ENCODE measurements at regions of chr12 and their contacts with region 1.

Region 1: GRCh38 chr12:4857472-4858291 is 52.0 kb upstream of the KCNA1 start:
- DNase-seq: peak; percentile 78
- ATAC-seq: peak; percentile 25
- H3K4me3 Mint-ChIP-seq: peak overlapping the region; percentile 28
- H3K27ac Mint-ChIP-seq: no peak overlapping the region
- H3K4me1 Mint-ChIP-seq: peaks cover 16% of the 10 kb centered on the region
- H3K27me3 Mint-ChIP-seq: peaks cover 34% of the 10 kb centered on the region
- CTCF ChIP-seq: peak; percentile 60

Region 2: DNA sequence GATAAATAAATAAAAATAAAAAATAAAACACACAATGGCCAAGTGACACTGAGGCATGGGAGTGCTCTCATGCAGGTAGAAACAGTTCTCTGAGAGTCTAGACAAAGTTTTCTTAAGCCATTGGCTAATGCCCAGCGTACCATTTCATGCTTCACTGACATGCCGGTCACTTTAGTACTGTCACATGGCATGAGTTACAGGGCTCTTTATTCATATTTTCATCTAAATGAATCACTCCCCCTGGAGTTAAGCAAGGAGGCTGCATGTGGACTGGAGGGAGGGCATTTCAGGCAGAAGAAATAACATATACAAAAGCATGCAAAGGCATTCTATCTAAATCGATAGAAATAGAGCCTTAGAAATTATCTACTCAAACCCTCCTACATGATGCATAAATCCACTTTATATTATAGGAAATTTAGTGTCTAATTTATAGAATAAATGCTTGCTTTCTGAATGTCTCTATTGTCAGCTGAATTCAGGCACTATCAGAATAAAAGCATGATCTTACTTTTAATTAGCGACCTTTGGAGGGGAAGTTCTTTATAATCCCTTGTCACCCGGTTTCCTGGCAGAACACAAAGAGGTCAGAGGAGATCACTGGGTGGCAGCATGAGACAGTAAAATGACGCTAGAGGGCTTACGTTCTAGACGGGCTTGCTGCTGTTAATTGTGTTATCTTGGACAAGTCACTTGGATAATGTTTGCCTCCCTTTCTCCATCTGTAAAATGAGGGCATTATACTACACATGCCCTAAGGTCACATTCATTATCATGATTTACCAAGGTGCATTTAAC is 278.2 kb before region 1 on chr12:
- CTCF ChIA-PET with region 1: interaction called, 10 read pairs
- POLR2A ChIA-PET with region 1: no interaction called
- DNase-seq: no peak
- ATAC-seq: peak; percentile 80
- H3K4me3 Mint-ChIP-seq: no peak overlapping the region
- H3K27ac Mint-ChIP-seq: no peak overlapping the region
- H3K4me1 Mint-ChIP-seq: peaks cover 20% of the 10 kb centered on the region
- H3K27me3 Mint-ChIP-seq: peaks cover 5% of the 10 kb centered on the region
- CTCF ChIP-seq: no peak

Region 3: GRCh38 chr12:4717806-4718205 is 139.9 kb before region 1 on chr12:
- CTCF ChIA-PET with region 1: no interaction called
- POLR2A ChIA-PET with region 1: no interaction called
- DNase-seq: no peak
- ATAC-seq: peak; percentile 18
- H3K4me3 Mint-ChIP-seq: no peak overlapping the region
- H3K27ac Mint-ChIP-seq: peak overlapping the region; percentile 24
- H3K4me1 Mint-ChIP-seq: peaks cover 58% of the 10 kb centered on the region
- H3K27me3 Mint-ChIP-seq: no peaks in the 10 kb centered on the region
- CTCF ChIP-seq: no peak

Region 4: DNA sequence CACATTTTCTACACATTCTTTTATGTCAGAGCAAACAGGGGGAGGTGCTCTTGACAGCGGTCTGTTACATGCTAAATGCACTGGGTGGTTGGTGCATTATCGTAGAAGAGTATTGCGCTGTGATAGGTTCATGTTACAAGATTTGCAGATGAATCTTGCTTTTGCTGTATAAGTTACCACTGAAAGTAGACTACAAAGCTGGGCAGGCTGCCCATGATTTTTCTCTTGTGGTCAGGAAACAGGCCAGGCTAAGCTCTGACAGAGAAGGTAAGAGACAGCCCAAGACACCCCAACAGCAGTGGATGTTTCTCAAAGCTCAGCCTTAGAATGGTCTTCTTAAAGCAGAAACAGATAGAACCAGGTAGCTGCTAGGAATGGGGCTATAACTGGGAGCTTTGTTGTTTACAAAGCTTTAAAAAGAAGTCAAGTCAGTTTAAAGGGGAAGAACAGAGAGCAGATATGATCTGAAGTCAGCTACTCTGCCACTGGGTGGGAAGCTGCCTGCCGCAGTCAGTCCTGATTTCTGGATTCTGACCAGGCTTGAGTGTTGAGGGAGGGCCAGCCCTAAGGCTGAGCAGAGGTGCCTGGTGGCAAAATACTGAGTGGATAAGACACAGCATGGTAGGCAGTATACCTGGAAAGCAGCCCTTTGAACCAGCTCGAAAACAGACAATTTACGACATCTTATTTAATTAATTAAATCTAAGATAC is 61.4 kb after region 1 on chr12:
- CTCF ChIA-PET with region 1: interaction called, 10 read pairs
- POLR2A ChIA-PET with region 1: no interaction called
- DNase-seq: no peak
- ATAC-seq: no peak
- H3K4me3 Mint-ChIP-seq: no peak overlapping the region
- H3K27ac Mint-ChIP-seq: no peak overlapping the region
- H3K4me1 Mint-ChIP-seq: no peaks in the 10 kb centered on the region
- H3K27me3 Mint-ChIP-seq: peaks cover 39% of the 10 kb centered on the region
- CTCF ChIP-seq: no peak

Region 5: DNA sequence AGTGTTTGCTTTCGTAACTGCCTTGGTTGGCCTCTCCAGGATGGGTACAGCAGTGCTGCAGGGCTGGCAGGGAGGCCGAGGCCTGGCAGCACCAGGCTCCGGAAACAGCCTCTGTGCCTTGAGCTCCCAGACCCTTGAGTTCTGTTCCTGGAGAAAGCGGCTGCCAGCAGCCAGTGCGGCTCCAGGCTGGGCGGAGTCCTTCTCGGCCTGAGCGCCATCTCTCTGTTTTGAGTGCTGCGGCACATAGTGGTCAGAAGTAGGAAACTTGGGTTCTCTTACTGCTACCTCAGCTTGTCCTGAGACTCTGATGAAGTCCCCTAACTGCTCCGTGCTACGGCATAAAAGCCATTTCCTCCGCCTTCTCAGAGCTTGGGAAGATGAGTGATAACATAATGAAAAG is 117.9 kb after region 1 on chr12:
- CTCF ChIA-PET with region 1: interaction called, 31 read pairs
- POLR2A ChIA-PET with region 1: no interaction called
- DNase-seq: peak; percentile 42
- ATAC-seq: peak; percentile 87
- H3K4me3 Mint-ChIP-seq: no peak overlapping the region
- H3K27ac Mint-ChIP-seq: no peak overlapping the region
- H3K4me1 Mint-ChIP-seq: peaks cover 11% of the 10 kb centered on the region; the same call in 1 of the 2 replicates
- H3K27me3 Mint-ChIP-seq: peaks cover 4% of the 10 kb centered on the region; the same call in 1 of the 2 replicates
- CTCF ChIP-seq: no peak

Region 6: DNA sequence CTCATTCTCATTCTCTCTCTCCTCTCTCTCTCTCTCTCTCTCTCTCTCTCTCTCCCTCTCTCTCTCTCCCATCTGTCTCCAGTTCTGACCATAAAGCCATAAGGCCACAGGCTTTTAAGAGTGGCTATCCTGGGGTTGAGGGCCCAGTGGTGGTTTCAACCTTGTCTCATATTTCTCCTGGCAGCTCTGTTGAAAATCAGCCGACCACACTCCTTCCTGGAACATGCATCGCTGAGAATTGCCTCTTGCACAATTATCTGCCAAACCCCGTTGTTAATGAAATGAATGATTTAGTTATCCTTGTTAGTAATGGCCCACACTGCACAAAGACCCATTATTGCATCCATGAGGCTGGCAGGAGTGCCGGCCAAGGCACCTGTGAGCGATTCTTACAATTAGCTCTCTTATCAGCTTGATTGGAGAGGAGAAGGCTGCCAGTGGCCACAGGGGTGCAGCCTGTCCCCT is 155.6 kb after region 1 on chr12:
- CTCF ChIA-PET with region 1: interaction called, 18 read pairs
- POLR2A ChIA-PET with region 1: no interaction called
- DNase-seq: no peak
- ATAC-seq: no peak
- H3K4me3 Mint-ChIP-seq: no peak overlapping the region
- H3K27ac Mint-ChIP-seq: no peak overlapping the region
- H3K4me1 Mint-ChIP-seq: peaks cover 7% of the 10 kb centered on the region
- H3K27me3 Mint-ChIP-seq: no peaks in the 10 kb centered on the region
- CTCF ChIP-seq: no peak

Region 7: DNA sequence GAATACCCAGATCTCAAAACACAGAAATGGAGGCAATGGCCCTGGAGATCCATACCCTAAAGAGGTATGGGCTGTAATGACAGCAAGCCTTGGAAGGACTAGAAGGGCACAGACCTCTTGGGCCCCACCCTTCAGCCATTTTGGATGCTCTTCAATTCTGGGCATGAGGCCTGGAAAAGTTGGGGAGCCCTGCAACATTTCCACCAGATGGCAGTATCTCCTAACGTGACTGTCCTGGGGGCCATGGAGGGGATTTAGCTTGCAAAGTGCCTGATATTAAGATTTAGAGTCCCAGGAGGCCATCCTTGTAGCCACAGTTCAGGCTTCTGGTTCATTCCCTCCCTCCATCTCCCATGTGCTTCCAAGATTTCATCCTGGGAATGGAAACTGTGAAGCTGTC is 216.2 kb after region 1 on chr12:
- CTCF ChIA-PET with region 1: interaction called, 15 read pairs
- POLR2A ChIA-PET with region 1: no interaction called
- DNase-seq: peak; percentile 56
- ATAC-seq: peak; percentile 68
- H3K4me3 Mint-ChIP-seq: no peak overlapping the region
- H3K27ac Mint-ChIP-seq: no peak overlapping the region
- H3K4me1 Mint-ChIP-seq: peaks cover 21% of the 10 kb centered on the region
- H3K27me3 Mint-ChIP-seq: peaks cover 5% of the 10 kb centered on the region
- CTCF ChIP-seq: no peak

Measured in WTC11 (cell line).